AG04449 (cell line): ENCODE measurements at regions of chr2 and their contacts with region 1.

Region 1: DNA sequence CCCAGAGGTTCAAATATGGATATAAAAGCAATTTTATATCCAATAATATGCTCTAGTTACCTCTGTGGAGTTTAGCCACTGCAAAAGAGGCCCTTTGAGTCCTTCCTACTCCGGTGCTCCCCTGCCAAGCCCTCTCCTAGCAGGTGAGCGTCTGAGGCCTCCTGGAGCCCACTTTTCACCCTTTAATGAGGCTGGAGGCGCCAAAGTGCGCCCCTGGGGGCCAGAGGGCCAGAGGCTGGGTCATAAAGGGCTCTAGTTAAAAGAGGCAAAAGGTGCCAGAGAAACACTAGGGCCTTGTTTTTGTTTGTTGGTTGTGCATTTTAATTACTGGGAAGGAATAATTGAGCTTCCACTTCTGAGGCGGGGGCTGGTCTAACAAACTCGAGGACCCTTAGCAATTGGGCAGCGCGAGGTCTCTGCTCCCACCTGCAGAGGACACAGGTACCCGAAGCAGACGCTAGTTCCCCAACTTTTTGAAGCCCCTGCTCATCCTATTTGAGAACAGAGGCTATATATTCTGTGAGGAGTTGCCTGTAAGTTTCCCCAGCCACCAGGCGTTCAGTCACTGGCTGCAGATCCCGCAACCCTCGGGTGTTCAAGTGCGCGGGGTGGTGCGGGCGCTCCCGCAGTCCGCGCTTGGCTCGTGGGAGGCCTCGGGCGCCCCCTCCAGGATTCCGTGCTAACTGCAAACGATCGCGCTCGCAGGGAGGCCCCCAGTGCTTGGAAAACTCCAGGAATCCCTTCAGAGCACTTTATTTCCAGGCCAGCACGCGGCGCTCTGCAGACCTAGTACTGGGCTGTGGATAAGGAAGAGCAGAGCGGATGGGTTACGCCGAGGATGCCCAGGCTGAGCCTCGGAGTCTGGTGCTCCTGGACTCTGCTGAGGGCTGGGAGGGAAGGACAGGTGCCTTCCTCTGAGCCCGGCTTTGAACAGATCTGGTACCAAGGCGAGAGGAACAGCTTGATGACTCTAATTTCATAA is 14.1 kb downstream of the MSGN1 start:
- DNase-seq: peak; percentile 9
- H3K4me3 ChIP-seq: peak overlapping the region; percentile 32
- CTCF ChIP-seq: peak; percentile 86

Region 2: DNA sequence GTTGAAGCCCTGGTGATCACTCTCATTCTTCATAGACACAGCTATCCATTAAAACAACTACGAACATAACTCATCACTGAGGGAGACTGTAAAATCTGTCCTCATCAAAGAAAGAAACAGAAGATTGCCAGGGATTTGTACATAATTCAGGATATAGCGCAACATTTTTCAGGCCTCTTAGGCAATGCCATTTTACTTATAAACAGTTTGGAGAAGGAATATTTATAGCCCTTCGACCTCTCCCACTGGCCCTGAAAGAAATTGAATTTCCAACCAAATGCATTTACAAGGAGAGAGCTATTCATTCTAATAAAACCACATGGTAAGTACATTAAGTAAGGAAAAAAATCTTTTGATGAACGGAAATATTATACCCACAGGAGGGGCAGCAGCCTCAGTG is 607.1 kb before region 1 on chr2:
- CTCF ChIA-PET with region 1: no interaction called
- POLR2A ChIA-PET with region 1: no interaction called
- DNase-seq: no peak
- H3K4me3 ChIP-seq: no peak overlapping the region
- CTCF ChIP-seq: no peak

Region 3: DNA sequence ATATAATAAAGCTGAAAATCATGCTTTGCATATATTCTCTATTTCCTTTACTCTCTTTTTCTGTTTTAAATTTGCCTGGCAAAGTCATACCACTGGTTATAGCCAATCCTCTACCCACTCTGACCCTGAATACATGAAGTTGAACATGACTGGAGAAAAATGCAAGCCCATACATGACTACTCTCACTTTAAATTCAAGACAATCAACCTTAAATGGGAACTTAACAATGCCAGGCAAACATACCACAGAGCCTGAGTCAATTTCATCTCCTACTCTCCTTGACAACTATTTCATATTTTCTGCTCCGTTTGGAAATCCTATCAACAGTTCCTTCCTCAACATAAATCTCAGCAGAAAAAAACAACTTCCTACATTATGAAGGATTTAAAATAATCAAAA is 334.8 kb before region 1 on chr2:
- CTCF ChIA-PET with region 1: no interaction called
- POLR2A ChIA-PET with region 1: no interaction called
- DNase-seq: no peak
- H3K4me3 ChIP-seq: no peak overlapping the region
- CTCF ChIP-seq: no peak

Region 4: DNA sequence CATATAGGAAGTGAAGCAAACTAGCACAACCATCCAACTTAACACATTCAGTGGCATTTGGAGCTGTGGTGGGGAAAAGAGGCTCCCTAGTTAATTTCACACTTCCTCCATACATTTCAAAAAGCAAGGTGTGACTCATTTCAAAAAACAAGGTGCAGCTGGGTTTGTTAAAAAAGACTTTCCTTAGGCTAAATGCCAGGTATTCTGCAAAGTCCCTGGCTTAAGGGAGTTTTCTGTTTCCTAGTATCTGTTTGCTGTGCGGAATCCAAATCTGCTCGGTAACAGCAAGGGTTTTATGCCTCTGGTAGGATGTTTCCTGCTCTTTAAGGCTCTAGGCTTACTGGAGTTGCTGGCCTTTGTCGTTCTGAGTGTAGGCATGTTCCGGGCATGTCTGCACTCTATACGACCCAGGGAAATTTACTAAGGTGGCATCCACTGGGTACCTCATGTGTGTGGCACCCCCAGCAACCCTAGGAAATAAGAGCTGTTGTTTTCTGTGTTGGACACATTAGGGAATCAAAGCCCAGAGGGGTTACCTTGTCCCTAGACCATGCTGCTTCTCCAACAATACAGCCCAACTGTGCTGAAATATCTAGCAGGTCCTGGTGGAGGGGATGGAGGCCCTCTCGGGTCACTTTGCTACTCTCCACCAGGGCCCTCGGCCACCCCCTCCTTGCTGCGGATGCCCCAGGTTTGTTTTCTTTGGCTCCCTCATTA is 14.7 kb before region 1 on chr2:
- CTCF ChIA-PET with region 1: interaction called, 20 read pairs
- POLR2A ChIA-PET with region 1: no interaction called
- DNase-seq: no peak
- H3K4me3 ChIP-seq: no peak overlapping the region
- CTCF ChIP-seq: no peak

Region 5: DNA sequence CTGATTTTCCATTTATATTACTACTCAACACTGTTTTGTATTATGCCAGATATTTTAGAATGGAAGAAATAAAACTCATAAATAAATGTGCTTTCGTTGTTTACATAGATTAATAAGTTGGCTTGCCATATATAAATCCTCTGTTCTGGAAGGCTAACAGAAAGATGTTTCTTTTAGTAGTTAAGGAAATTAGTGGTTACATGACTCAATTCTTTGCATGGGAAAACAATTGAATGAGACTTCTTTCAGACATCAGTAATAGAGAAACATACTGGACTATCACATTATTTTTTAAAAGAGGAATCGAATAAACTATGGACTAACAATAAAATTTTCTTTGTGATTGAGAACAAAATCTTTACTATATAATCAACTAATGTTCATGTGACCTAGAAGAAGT is 384.6 kb after region 1 on chr2:
- CTCF ChIA-PET with region 1: no interaction called
- POLR2A ChIA-PET with region 1: no interaction called
- DNase-seq: no peak
- H3K4me3 ChIP-seq: no peak overlapping the region
- CTCF ChIP-seq: no peak